CD14-positive monocyte (primary cell): ENCODE measurements at regions of chr2 and their contacts with region 1.

Region 1: GRCh38 chr2:224946895-224947294 is 95.4 kb downstream of the DOCK10 start:
- DNase-seq: peak; percentile 84 to 96 (median 94)
- H3K4me3 ChIP-seq: peak overlapping the region; percentile 41 to 82 (median 71)
- H3K4me3 Mint-ChIP-seq: peak overlapping the region; percentile 74 to 88
- H3K27ac ChIP-seq: peak overlapping the region; percentile 48 to 93
- H3K27ac Mint-ChIP-seq: peak overlapping the region; percentile 97 to 98 (median 98)
- H3K4me1 ChIP-seq: peaks cover 84 to 94% of the 10 kb centered on the region in 2 donors
- H3K4me1 Mint-ChIP-seq: peaks cover 88% of the 10 kb centered on the region
- H3K27me3 ChIP-seq: no peaks in the 10 kb centered on the region
- H3K27me3 Mint-ChIP-seq: peaks cover 0 to 2% (median 1%) of the 10 kb centered on the region in 3 donors
- CTCF ChIP-seq: no peak

Region 2: DNA sequence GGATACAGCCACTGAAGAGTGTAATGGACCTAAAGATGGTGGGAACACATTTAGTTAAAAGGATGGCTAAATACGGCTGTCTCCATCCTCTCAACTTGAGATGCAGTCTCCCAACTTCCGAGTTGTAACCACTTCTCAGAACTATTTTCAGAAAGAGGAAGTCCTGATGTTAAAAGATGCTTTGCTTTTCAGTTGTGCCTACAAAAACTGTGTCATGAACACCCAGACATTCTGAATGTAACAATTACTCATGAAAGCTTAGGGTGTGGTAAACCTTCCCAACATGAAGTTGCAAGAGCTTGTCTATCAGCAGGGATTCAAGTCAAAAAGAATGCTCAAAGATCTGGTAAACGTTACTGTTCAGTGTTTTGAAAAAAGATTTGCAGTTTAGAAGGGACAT is 52.5 kb before region 1 on chr2:
- intact Hi-C with region 1: loop called in 1 of 2 experiments (anchors 10 kb)
- DNase-seq: peak; percentile 82 to 94 (median 83)
- H3K4me3 ChIP-seq: peak overlapping the region in 1 of 3 experiments; percentile 35
- H3K4me3 Mint-ChIP-seq: peak overlapping the region; percentile 39 to 71
- H3K27ac ChIP-seq: peak overlapping the region; percentile 19 to 87
- H3K27ac Mint-ChIP-seq: peak overlapping the region; percentile 89 to 97 (median 94)
- H3K4me1 ChIP-seq: peaks cover 60 to 63% of the 10 kb centered on the region in 2 donors
- H3K4me1 Mint-ChIP-seq: peaks cover 63% of the 10 kb centered on the region
- H3K27me3 ChIP-seq: no peaks in the 10 kb centered on the region
- H3K27me3 Mint-ChIP-seq: peaks cover 0 to 2% (median 0%) of the 10 kb centered on the region in 3 donors
- CTCF ChIP-seq: no peak